Activated T-helper 1 cell treated with anti-CD3 and anti-CD28 coated beads, Interleukin-12 subunit alpha, Interleukin-12 subunit beta, Interleukin-2, Interleukin-4 antibody, amounts not matched to agents 30 ng/mL and 10 ng/mL and 1 ng/mL, durations not matched to agents 14 hours and 24 hours and 36 hours (primary cell): ENCODE measurements at regions of chr6 and their contacts with region 1.

Region 1: GRCh38 chr6:73520688-73521350 is at the start of gene EEF1A1:
- DNase-seq: peak; percentile 98
- H3K4me3 Mint-ChIP-seq: peak within 1 kb of the TSS; percentile 88
- H3K27ac Mint-ChIP-seq: peak within 1 kb of the TSS; percentile 100
- H3K4me1 Mint-ChIP-seq: peaks cover 28% of the 10 kb centered on the region
- H3K27me3 Mint-ChIP-seq: peaks cover 5% of the 10 kb centered on the region
- total RNA-seq, gene EEF1A1: 8,439 and 8,694 TPM in 2 replicates

Region 2: GRCh38 chr6:73451223-73452107 is 69.4 kb before region 1 on chr6:
- intact Hi-C with region 1: loop called (anchors 1 kb)
- DNase-seq: peak; percentile 22
- H3K4me3 Mint-ChIP-seq: peak overlapping the region; percentile 97
- H3K27ac Mint-ChIP-seq: peak overlapping the region; percentile 87
- H3K4me1 Mint-ChIP-seq: peaks cover 35% of the 10 kb centered on the region
- H3K27me3 Mint-ChIP-seq: no peaks in the 10 kb centered on the region

Region 3: DNA sequence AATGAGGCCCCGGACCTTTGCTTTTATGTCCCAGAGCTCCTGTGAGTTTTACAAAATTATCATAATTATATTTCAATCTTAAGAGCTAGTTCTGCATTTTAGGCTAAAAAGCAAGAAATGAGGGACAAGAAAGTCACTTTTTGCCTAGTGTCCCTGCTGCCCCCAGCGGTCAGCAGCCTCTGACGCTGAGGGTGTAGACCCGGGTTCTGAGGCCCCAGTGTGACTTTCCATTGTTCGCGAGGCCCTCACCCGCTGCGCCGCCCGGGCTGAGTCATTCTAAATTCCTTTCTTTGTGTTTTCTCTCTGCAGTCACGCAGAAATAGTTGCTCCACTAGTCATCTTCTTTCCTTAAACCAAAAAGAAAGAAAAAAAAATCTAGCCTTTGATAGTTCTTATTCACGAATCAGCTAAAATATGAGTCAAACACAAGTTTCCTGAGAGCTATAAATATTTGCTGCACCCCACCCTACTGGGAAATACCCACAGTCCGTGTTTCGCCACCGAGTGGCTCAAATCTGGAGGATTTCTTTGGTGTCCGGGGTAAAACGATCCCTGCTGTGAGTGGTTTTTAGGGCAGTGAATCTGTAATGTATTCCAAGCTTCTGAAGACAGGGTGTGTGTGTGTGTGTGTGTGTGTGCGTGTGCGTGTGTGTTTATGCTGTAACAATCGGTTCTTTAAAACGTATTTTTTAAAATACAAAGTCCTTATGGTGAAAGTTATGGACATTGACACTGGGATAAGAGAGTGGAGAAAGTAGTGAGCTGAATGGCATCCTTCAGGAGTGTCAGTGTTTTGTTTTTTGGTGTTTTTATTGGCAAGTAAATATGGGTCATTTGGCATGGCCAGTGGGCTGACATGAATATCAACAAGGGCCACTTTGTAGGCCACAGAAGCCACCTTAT is 59.7 kb after region 1 on chr6:
- intact Hi-C with region 1: loop called (anchors 1 kb)
- DNase-seq: peak; percentile 47
- H3K4me3 Mint-ChIP-seq: peak overlapping the region; percentile 69
- H3K27ac Mint-ChIP-seq: peak overlapping the region; percentile 95
- H3K4me1 Mint-ChIP-seq: peaks cover 27% of the 10 kb centered on the region
- H3K27me3 Mint-ChIP-seq: no peaks in the 10 kb centered on the region

Region 4: GRCh38 chr6:73610444-73611275 is 89.8 kb after region 1 on chr6:
- intact Hi-C with region 1: loop called (anchors 1 kb)
- DNase-seq: no peak
- H3K4me3 Mint-ChIP-seq: no peak overlapping the region
- H3K27ac Mint-ChIP-seq: no peak overlapping the region
- H3K4me1 Mint-ChIP-seq: peaks cover 6% of the 10 kb centered on the region
- H3K27me3 Mint-ChIP-seq: no peaks in the 10 kb centered on the region

Region 5: GRCh38 chr6:73695619-73696421 is 175.0 kb after region 1 on chr6 and contains the start of gene CD109:
- intact Hi-C with region 1: loop called (anchors 1 kb)
- DNase-seq: peak; percentile 61
- H3K4me3 Mint-ChIP-seq: peak within 1 kb of the TSS; percentile 88
- H3K27ac Mint-ChIP-seq: peak within 1 kb of the TSS; percentile 95
- H3K4me1 Mint-ChIP-seq: peaks cover 62% of the 10 kb centered on the region
- H3K27me3 Mint-ChIP-seq: peaks cover 4% of the 10 kb centered on the region
- total RNA-seq, gene CD109: 27.1 and 29.3 TPM in 2 replicates

Region 6: GRCh38 chr6:74066168-74066871 is 545.5 kb after region 1 on chr6:
- intact Hi-C with region 1: no loop called
- DNase-seq: no peak
- H3K4me3 Mint-ChIP-seq: no peak overlapping the region
- H3K27ac Mint-ChIP-seq: no peak overlapping the region
- H3K4me1 Mint-ChIP-seq: no peaks in the 10 kb centered on the region
- H3K27me3 Mint-ChIP-seq: no peaks in the 10 kb centered on the region

Region 7: DNA sequence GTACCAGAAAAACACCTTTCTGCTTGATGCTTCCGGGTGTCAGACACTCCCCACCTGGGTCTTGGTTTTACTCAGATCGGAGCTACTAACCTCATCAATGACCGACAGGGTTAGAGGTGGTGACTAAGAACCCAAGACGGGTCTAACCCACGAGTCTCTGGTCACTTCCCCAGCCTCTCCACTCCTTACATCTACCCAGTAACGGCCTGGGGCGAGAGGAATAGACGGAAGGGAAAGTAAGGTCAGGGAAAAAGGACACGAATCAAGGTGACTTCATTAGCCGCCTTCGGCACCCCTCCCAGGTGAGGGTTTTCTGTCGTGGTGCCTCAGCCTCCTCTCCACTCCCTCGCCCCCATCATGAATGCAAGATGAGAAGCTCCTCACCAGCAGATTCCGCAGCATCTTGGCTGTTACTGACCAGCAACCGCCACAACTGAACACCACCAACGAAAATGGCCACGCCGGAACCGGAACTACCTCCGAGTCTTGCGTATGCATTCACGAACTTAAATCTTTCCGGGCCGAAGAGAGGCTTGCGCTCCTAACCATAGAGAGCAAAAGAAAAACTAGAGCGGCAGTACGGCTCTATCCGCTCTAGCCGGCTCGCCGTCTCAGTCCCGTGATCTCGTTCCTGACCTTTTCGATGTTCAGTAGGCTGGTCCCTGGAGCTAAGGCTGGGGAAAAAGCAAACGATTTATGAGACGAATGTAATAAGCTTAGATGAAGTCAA is 1722.7 kb after region 1 on chr6 and contains the start of gene COX7A2:
- intact Hi-C with region 1: loop called (anchors 5 kb)
- DNase-seq: peak; percentile 83
- H3K4me3 Mint-ChIP-seq: peak within 1 kb of the TSS; percentile 96
- H3K27ac Mint-ChIP-seq: peak within 1 kb of the TSS; percentile 98
- H3K4me1 Mint-ChIP-seq: peaks cover 24% of the 10 kb centered on the region
- H3K27me3 Mint-ChIP-seq: peaks cover 12% of the 10 kb centered on the region
- total RNA-seq, gene COX7A2: 495 and 497 TPM in 2 replicates